Heart left ventricle (tissue), 16 donors: ENCODE measurements at regions of chr1 and their contacts with region 1.

Region 1: DNA sequence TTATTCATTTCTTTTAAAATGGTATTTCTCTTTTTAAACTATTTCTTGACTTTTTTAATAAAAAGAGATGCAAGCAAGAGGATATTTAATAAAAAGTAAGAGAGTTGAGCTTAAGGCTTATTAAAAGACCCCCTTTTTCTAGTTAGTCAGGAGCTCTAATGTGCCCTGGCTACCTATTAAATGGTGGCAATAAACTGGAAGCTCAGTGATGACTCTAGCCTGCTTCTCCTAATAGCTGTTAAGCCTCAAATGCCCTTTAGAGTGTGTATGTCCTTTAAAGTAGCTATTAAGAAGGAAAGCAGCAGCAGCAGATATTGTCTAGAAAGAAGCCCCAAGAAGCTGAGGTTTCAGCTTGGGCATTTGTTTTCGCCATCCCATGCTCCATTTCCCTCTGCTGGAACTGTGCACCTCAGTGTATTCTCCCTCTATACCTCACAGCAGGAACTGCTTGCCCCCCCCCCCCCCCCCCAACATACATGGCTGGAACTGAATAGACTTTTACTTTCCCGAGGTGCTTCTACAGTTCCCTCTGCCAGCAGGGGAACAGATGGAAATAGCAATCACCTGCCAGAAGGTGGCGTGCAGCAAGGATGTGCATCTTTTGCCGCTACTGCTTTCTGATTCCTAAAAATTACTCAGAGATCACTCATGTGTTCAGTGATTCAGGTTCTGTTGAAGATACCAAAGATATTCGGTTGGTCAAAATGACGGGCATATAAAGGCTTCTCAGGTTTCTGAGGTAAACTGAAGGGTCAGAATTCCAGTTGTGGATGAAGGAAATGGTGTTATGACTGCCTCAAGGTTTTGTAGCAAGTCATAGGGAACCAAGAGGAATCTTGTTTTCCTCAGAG is 2.5 kb downstream of the RGS4 start:
- DNase-seq: peak in 4 of 5 donors; percentile 41 to 64 (median 62)
- ATAC-seq: peak in 3 of 4 donors; percentile 32 to 76 (median 61)
- H3K4me3 ChIP-seq: peak overlapping the region in 7 of 12 donors; percentile 23 to 65 (median 53)
- H3K27ac ChIP-seq: peak overlapping the region in 4 of 12 donors; percentile 18 to 62 (median 46)
- H3K4me1 ChIP-seq: peaks cover 0 to 5% (median 0%) of the 10 kb centered on the region in 12 donors
- H3K27me3 ChIP-seq: peaks cover 0 to 18% (median 0%) of the 10 kb centered on the region in 9 donors
- CTCF ChIP-seq: peak; percentile 34 to 74 (median 59)
- POLR2A ChIP-seq: no peak

Region 2: GRCh38 chr1:162878000-162878596 is 193.5 kb before region 1 on chr1:
- intact Hi-C with region 1: loop called (anchors 1 to 10 kb)
- DNase-seq: peak in 4 of 5 donors; percentile 33 to 57 (median 46)
- ATAC-seq: peak in 3 of 4 donors; percentile 69 to 78 (median 70)
- H3K4me3 ChIP-seq: no peak overlapping the region
- H3K27ac ChIP-seq: no peak overlapping the region
- H3K4me1 ChIP-seq: no peaks in the 10 kb centered on the region
- H3K27me3 ChIP-seq: peaks cover 0 to 6% (median 0%) of the 10 kb centered on the region in 9 donors
- CTCF ChIP-seq: peak; percentile 54 to 78 (median 70)
- POLR2A ChIP-seq: no peak